ENCODE measurements at regions of chr2 and their contacts with region 1.

Region 1: GRCh38 chr2:233251306-233252116 is at the start of gene ATG16L1:
- DNase-seq: peak; percentile 99
- CTCF ChIP-seq: peak; percentile 97

Region 2: DNA sequence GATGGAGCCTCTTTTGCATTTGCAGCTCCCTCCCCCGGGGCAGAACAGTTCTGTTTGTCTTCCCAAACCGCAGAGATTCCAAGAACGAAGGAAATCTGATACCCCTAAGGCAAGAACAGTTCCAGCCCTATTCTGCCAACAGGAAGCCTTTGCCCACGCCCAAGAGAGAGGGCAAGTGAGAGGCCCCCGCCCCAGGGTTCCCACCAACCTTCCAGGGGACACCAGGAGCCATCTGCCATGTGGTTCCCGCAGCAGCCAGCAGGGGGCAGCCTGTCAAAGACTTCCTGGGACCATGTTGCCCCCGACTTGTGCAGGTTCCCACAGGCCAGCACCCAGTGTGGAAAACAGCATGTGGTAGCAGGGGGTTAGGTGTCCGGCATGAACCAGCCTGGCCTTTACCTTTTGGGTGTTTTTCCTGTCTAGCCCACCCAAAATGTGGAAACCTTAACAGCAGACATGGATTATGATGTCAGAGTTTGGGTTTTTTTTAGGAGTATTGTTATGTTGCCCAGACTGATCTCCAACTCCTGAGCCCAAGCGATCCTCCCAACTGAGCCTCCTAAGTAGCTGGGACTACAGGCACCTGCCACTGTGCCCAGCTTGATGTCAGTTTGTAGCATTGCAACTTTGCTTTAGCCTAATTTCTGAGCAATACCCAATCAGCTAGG is 639.8 kb before region 1 on chr2:
- in situ Hi-C with region 1: loop called (anchors 25 kb)
- DNase-seq: peak; percentile 77
- CTCF ChIP-seq: peak; percentile 86

Region 3: DNA sequence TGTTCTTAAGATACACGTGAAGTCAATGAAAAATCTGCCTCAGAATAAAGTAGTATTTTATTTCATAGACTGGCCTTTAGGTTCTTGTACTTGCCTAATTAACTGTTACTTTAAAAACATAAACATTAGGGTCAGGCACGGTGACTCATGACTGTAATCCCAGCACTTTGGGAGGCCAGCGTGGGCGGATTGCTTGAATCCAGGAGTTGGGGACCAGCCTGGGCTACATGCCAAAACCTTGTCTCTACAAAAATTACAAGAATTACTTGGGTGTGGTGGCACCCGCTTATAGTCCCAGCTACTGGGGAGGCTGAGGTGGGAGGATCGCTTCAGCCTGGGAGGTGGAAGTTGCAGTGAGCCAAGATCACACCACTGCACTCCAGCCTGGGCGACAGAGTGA is 397.4 kb before region 1 on chr2:
- in situ Hi-C with region 1: loop called (anchors 10 kb)
- DNase-seq: no peak
- CTCF ChIP-seq: no peak

Region 4: DNA sequence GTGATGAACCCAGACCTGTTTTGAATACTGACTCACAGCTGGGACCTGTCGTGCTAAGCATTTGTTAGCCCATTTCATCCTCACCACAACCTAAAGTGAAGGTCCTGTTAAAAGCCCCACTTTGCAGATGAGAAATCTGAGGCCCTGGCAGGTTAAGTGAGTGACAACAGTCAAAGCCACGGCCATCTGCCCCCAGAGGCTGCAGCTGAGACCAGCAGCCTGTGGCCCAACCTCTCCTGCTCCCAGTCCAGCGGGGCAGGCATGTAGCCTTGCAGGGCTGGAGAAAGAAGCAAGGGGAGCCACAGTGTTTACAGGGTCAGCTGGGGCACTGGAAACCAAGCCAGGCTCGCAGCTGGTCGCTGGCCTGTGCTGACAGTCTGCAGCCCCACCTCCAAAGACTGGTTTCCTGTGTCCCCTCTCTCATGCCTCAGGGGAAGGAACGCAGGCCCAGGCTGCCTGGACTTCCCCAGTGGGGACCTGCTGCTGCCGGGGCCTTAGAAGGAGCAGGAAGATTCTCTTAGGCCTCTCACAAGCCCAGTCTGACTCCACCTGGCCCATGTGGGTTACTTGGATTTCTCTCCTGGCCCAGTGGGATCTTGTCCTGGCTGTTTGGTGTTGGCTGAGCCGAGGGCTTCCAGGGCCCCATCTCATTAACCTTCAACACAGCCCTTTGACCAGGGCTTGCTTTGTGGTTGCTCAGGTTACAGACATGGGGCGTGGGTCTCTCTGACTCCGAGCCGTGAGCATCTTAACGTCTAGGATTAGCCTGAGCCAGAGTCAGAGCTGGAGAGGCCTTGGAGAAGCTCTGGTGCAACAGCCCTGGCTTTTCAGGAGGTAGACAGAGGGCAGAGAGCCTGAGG is 189.7 kb before region 1 on chr2:
- in situ Hi-C with region 1: loop called (anchors 10 kb)
- DNase-seq: peak; percentile 78
- CTCF ChIP-seq: peak; percentile 39